ENCODE measurements at regions of chr19 and their contacts with region 1.

Region 1: DNA sequence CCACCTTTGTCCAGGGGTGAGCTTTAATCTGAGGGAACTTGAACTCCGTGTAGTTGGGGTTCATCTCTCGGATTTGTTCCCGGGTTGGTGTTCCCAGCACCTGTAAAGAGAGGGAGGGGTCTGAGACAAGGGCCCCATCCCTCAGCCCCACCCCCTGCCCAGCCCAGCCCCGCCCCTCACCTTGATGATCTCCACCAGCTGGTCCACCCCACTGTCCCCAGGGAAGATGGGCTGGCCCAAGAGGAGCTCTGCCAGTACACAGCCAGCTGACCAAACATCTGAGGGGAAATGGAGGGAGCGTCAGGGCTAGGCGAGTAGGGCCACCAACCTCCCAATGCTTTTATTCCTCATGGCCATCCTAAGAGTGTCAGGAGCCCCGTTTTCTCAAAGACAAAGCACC is 9.3 kb downstream of the GSK3A start:
- DNase-seq: no peak

Region 2: GRCh38 chr19:42219812-42220750 is 13.0 kb before region 1 on chr19 and contains the start of gene ZNF526:
- CTCF ChIA-PET with region 1: no interaction called
- POLR2A ChIA-PET with region 1: interaction called, 30 read pairs
- DNase-seq: peak; percentile 99

Measured in HEK293T (cell line).